ENCODE measurements at regions of chr12 and their contacts with region 1.

Region 1: GRCh38 chr12:30257618-30258017 is 438.1 kb downstream of the IPO8 start:
- DNase-seq: no peak
- ATAC-seq: no peak
- H3K4me3 ChIP-seq: no peak overlapping the region
- H3K27ac ChIP-seq: no peak overlapping the region
- H3K4me1 ChIP-seq: no peaks in the 10 kb centered on the region
- H3K27me3 ChIP-seq: no peaks in the 10 kb centered on the region
- CTCF ChIP-seq: no peak

Region 2: DNA sequence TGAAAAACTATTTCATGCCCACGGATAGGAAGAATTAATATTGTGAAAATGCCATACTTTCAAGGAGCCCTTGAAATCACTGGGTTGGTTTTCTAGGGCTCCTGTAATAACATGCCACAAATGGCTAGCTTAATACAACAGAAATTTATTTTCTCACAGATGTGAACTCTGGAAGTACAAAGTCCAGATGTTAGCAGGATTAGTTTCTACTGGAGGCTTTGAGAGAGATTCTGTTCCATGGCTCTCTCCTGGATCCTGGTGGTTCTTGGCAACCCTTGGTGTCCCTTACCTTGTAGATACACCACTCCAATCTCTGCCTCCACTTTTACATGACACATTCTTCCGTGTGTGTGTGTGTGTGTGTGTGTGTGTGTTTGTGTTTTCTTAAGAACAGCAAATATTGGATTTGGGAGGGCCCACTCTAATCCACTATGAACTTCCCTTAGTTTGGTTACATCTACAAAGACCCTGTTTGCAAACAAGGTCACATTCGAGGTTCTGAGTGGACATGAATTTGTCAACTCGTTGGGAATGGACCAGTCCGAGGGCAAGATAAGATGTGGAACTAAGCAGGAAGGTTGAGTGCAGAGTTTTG is 57.0 kb after region 1 on chr12:
- CTCF ChIA-PET with region 1: no interaction called
- POLR2A ChIA-PET with region 1: no interaction called
- in situ Hi-C with region 1: no loop called
- intact Hi-C with region 1: loop called (anchors 10 kb)
- DNase-seq: no peak
- ATAC-seq: no peak
- H3K4me3 ChIP-seq: no peak overlapping the region
- H3K27ac ChIP-seq: no peak overlapping the region
- H3K4me1 ChIP-seq: no peaks in the 10 kb centered on the region
- H3K27me3 ChIP-seq: no peaks in the 10 kb centered on the region
- CTCF ChIP-seq: no peak

Measured in Panc1 (cell line).